GM10248 (cell line): ENCODE measurements at regions of chr13 and their contacts with region 1.

Region 1: DNA sequence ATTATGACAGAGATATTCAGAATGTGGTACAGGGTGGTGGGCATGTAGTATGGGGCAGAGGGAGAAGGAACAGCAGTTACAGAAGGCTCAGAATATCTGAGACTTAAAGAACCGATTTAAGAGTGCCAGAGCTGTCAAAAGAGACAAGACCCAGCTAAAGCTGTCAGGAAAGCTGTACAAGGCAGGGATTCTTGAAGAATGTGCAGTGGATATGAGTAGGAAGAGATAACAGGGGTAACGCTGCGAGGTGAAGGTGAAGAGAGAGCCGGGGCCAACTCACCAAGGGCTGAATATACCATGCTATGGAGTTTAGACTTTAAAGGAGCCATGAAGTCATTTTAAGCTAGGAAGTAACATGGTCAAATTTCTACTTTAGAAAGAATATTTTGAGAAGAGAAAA is 381.0 kb downstream of the DIAPH3 start:
- DNase-seq: no peak
- CTCF ChIP-seq: no peak

Region 2: DNA sequence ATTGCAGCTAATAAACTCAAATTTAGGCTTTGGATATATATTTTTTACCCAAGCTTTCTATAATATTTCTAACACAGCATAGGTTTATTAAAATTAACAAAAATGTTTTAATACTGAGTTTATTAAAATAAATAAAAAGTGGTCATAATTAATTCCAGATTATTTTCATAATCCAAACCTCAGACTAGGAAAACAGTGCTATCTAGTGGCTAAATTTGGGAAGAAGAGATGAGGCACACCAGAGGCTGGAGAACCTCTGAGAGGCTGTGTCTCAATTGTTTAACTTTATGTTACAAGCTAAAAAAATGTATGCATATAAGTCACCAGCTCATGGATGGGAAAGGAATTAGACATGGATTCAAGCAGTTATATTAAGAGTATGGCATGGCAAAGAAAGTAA is 11.4 kb before region 1 on chr13:
- CTCF ChIA-PET with region 1: interaction called, 16 read pairs
- POLR2A ChIA-PET with region 1: no interaction called
- DNase-seq: no peak
- CTCF ChIP-seq: peak; percentile 29

Region 3: GRCh38 chr13:59801107-59801880 is 18.6 kb after region 1 on chr13:
- CTCF ChIA-PET with region 1: no interaction called
- POLR2A ChIA-PET with region 1: no interaction called
- DNase-seq: no peak
- CTCF ChIP-seq: no peak